CD4-positive, alpha-beta T cell (primary cell): ENCODE measurements at regions of chr22 and their contacts with region 1.

Region 1: DNA sequence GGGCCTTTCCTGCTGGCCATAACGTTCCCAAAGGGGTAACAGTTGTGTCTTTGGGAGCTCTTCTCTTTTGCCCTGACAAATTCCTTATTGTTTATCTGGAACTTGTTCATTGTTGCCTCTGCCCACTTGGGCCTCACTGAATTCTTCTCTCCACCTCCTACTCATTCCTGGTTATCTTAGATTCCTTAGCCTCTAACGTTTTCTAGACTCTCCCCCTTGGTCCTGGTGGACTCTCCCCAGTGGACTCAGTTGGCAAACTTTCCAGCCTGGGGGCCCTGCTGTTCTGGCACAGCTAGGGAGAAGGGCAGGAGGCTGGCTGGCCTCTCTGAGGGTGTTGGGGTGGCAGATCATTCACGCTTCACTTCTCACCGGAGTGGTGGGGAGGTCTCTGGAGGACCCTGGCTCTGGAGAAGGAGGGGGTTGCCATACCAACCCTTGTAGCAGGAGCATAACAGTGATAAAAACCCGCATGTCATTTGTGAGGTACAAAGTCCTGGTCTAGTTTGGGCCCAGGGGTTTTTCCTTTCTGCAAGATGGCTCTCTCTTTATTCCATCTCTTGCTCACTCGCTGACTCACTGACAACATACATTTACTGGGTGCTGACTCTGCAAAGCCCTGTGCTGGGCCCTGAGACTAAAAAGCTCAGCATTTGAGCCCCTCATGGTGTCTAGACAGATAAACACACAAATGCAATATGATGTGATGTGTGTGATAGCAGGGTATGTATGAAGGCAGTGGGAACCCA is 39.7 kb downstream of the YWHAH start:
- DNase-seq: no peak
- ATAC-seq: no peak
- H3K4me3 ChIP-seq: no peak overlapping the region
- H3K4me3 Mint-ChIP-seq: no peak overlapping the region
- H3K27ac ChIP-seq: no peak overlapping the region
- H3K27ac Mint-ChIP-seq: no peak overlapping the region
- H3K4me1 ChIP-seq: no peaks in the 10 kb centered on the region
- H3K4me1 Mint-ChIP-seq: no peaks in the 10 kb centered on the region
- H3K27me3 ChIP-seq: no peaks in the 10 kb centered on the region
- H3K27me3 Mint-ChIP-seq: peaks cover 12% of the 10 kb centered on the region
- CTCF ChIP-seq: no peak

Region 2: DNA sequence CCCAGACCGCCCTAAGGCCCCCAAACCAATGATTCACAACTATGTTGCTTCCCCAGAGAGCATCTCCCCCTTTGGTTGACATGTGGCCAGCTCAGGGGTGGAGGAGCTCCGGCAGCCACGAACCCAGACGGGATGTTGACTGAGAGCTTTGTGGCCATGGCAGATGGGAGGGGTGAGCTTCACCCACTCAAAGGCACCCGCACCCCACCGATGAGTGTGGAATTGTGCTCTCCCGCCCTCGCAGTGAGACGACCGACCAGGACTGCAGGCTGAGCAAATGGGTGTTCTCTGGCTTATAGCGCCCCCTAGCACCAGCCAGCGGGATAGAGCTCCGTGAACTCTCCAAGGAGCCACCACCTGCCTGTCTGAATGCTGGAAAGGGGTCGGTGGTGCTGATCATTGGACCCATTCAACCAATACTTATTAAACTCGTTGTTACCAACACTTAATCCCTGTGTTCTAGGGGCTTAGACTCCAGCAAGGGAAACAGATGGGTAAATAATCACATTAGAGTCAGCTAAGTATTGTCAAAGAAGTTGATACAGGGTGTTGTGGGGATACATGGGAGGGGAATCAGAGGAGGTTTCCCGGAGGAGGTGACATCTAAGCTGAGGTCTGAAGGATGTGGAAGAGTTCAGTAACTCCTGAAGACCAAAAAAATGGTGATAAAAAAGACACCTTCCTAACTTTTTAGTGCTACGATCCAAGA is 812.9 kb after region 1 on chr22:
- CTCF ChIA-PET with region 1: no interaction called
- POLR2A ChIA-PET with region 1: no interaction called
- intact Hi-C with region 1: loop called (anchors 10 kb)
- DNase-seq: peak; percentile 25 to 76 (median 42)
- ATAC-seq: peak; percentile 62
- H3K4me3 ChIP-seq: no peak overlapping the region
- H3K4me3 Mint-ChIP-seq: no peak overlapping the region
- H3K27ac ChIP-seq: no peak overlapping the region
- H3K27ac Mint-ChIP-seq: no peak overlapping the region
- H3K4me1 ChIP-seq: peaks cover 10% of the 10 kb centered on the region
- H3K4me1 Mint-ChIP-seq: no peaks in the 10 kb centered on the region
- H3K27me3 ChIP-seq: peaks cover 14 to 27% of the 10 kb centered on the region in 2 experiments
- H3K27me3 Mint-ChIP-seq: peaks cover 37% of the 10 kb centered on the region
- CTCF ChIP-seq: peak; percentile 71